ENCODE measurements at regions of chr1 and their contacts with region 1.

Region 1: GRCh38 chr1:212455803-212456528 is 23.2 kb downstream of the NENF start:
- DNase-seq: peak; percentile 91
- ATAC-seq: peak; percentile 77
- H3K4me3 Mint-ChIP-seq: no peak overlapping the region
- H3K27ac Mint-ChIP-seq: no peak overlapping the region
- H3K4me1 Mint-ChIP-seq: peaks cover 7% of the 10 kb centered on the region
- H3K27me3 Mint-ChIP-seq: no peaks in the 10 kb centered on the region

Region 2: DNA sequence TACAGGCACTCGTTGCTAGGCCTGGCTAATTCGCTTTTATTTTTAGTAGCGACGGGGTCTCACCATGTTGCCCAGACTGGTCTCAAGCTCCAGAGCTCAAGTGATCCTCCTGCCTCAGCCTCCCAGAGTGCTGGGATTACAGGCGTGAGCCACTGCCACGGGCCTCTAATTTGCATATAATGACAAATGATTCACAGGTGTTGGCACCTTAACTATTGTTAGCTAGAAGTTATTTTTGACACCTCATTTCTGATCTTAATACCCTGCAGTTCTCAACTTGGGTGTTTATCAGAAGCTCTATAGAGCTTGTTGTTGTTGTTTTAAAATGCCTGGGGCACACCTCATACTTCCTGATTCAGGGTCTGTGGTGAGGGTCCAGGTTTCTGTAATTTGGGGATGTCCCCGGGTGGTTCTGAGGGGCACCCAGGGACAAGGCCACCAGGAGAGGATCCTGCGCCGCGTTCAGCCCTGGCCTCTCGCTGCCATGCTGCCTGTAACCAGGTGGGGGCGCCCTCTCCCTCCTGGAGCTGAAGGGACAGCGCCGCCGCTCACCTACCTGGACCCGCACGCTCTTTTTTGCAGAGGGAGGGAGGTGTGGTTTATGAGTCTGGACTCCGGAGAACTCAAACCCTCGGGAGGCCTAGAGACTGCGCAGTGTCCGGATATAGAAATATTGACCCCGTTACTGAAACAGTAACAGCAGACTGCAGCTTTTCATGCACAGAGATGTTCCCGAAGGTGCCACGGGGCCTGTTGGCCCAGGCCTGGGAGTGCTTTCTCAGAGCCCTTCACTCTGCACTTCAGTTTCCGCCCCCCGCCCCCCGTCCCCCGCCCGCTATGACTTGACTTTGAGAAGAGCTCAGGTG is 757.6 kb before region 1 on chr1:
- CTCF ChIA-PET with region 1: interaction called, 35 read pairs
- POLR2A ChIA-PET with region 1: no interaction called
- intact Hi-C with region 1: loop called in 1 of 2 experiments (anchors 5 kb)
- DNase-seq: peak; percentile 92
- ATAC-seq: peak; percentile 98
- H3K4me3 Mint-ChIP-seq: no peak overlapping the region
- H3K27ac Mint-ChIP-seq: no peak overlapping the region
- H3K4me1 Mint-ChIP-seq: peaks cover 9% of the 10 kb centered on the region
- H3K27me3 Mint-ChIP-seq: no peaks in the 10 kb centered on the region

Region 3: GRCh38 chr1:211825980-211826379 is 630.0 kb before region 1 on chr1:
- CTCF ChIA-PET with region 1: no interaction called
- POLR2A ChIA-PET with region 1: no interaction called
- intact Hi-C with region 1: no loop called
- DNase-seq: no peak
- ATAC-seq: no peak
- H3K4me3 Mint-ChIP-seq: no peak overlapping the region
- H3K27ac Mint-ChIP-seq: no peak overlapping the region
- H3K4me1 Mint-ChIP-seq: peaks cover 21% of the 10 kb centered on the region
- H3K27me3 Mint-ChIP-seq: no peaks in the 10 kb centered on the region

Region 4: DNA sequence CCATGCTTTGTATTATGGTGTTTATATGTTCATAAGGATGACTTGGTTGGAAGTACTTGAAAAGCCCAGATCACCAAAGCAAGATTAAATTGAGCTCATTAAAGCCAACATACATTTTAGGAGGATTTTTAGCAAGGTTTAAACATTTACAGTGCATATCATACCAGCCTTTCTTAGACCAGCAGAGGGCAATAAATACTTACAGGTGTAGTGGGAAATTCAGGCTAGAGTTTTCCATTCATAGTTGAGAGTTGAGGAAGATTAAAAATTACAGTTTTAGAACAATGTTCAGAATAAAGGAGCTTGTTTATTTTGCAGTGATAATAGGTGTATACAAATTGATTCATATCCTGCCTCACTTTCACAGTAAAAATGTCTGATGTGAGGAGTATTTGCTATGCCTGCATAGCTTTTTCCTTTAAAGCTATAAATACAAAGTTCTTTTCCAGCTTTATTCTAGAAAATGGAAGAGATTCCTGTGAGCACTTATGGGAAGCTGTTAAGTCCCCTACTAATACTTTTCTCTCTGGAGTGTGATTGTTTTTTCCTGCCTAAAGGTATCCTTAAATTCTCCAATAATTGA is 385.2 kb before region 1 on chr1:
- CTCF ChIA-PET with region 1: interaction called, 32 read pairs
- POLR2A ChIA-PET with region 1: no interaction called
- intact Hi-C with region 1: no loop called
- DNase-seq: no peak
- ATAC-seq: no peak
- H3K4me3 Mint-ChIP-seq: no peak overlapping the region
- H3K27ac Mint-ChIP-seq: no peak overlapping the region
- H3K4me1 Mint-ChIP-seq: no peaks in the 10 kb centered on the region
- H3K27me3 Mint-ChIP-seq: no peaks in the 10 kb centered on the region

Region 5: DNA sequence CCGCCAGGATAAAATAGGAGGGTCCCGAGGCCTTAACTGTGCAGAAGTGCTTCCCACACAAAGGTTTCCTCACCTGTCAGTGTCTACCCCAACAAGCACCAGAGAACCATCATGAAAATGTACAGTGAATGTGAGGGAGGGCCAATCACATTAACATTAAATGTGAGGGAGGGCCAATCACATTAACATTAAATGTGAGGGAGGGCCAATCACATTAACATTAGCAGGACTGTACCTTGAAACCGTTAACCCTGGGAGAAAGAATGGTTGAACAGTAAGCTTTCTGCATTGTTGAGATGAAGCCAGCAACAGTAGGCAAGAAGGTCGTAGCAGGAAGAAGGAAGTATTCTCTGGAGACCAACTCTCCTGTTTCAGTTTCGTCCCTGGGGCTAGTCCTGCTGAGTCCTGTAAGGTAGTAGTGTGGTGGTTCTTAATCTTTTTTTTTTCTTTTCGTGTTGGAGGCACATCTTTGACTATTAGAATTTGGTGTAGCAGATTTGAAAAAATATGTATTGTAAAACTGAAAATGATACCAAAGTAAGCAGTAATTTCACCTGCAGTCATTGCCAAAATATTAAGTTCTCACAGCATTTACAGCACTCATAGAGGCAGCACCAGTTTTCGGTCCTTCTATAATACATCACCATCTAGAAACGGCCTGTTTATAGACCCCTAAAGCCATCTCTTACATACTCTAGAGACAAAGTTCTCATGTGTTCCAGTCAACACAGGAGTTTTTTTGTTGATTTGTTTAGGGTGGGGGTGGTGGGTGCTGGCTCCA is 269.3 kb before region 1 on chr1:
- CTCF ChIA-PET with region 1: no interaction called
- POLR2A ChIA-PET with region 1: no interaction called
- intact Hi-C with region 1: no loop called
- DNase-seq: no peak
- ATAC-seq: peak; percentile 59
- H3K4me3 Mint-ChIP-seq: no peak overlapping the region
- H3K27ac Mint-ChIP-seq: peak overlapping the region; percentile 8
- H3K4me1 Mint-ChIP-seq: peaks cover 19% of the 10 kb centered on the region
- H3K27me3 Mint-ChIP-seq: no peaks in the 10 kb centered on the region

Region 6: GRCh38 chr1:212375986-212376385 is 80.0 kb before region 1 on chr1:
- CTCF ChIA-PET with region 1: interaction called, 21 read pairs
- POLR2A ChIA-PET with region 1: no interaction called
- intact Hi-C with region 1: no loop called
- DNase-seq: no peak
- ATAC-seq: no peak
- H3K4me3 Mint-ChIP-seq: no peak overlapping the region
- H3K27ac Mint-ChIP-seq: no peak overlapping the region
- H3K4me1 Mint-ChIP-seq: no peaks in the 10 kb centered on the region
- H3K27me3 Mint-ChIP-seq: no peaks in the 10 kb centered on the region

Region 7: DNA sequence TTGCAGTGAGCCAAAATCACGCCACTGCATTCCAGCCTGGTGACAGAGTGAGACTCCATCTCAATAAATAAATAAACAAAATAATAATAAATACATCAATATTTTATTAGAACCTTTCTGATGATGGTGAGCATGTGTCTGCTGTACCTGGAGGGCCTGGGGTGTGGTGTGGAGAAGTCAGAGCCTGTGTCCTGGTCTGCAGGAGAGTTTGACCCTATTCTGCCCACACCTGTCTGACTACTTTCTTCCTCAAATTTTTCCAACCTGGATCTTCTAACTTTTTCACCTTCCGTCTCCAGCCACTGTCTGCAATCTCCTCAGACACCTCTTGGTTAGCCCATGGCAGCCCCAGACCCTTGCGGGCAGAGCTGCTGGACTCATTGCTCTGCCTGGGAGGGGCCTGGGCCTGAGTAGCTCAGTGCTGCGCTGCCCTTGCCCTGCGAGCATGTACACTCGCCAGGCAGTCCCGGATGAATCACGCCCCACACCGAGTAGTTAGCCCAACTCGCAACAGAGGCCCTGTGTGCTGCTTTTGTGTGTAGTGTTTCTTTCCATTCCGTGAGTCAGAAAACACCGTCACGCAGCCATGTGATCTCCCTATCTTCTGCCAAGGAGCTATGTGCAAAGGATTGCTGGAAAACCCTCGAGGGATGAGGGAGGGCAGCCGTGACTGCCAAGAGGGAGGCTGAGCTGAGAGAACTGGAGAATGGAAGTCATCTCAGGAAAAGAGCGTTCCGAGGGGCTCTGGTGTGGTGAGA is 13.9 kb after region 1 on chr1:
- CTCF ChIA-PET with region 1: interaction called, 74 read pairs
- POLR2A ChIA-PET with region 1: no interaction called
- intact Hi-C with region 1: no loop called
- DNase-seq: no peak
- ATAC-seq: no peak
- H3K4me3 Mint-ChIP-seq: no peak overlapping the region
- H3K27ac Mint-ChIP-seq: no peak overlapping the region
- H3K4me1 Mint-ChIP-seq: no peaks in the 10 kb centered on the region
- H3K27me3 Mint-ChIP-seq: no peaks in the 10 kb centered on the region

Region 8: DNA sequence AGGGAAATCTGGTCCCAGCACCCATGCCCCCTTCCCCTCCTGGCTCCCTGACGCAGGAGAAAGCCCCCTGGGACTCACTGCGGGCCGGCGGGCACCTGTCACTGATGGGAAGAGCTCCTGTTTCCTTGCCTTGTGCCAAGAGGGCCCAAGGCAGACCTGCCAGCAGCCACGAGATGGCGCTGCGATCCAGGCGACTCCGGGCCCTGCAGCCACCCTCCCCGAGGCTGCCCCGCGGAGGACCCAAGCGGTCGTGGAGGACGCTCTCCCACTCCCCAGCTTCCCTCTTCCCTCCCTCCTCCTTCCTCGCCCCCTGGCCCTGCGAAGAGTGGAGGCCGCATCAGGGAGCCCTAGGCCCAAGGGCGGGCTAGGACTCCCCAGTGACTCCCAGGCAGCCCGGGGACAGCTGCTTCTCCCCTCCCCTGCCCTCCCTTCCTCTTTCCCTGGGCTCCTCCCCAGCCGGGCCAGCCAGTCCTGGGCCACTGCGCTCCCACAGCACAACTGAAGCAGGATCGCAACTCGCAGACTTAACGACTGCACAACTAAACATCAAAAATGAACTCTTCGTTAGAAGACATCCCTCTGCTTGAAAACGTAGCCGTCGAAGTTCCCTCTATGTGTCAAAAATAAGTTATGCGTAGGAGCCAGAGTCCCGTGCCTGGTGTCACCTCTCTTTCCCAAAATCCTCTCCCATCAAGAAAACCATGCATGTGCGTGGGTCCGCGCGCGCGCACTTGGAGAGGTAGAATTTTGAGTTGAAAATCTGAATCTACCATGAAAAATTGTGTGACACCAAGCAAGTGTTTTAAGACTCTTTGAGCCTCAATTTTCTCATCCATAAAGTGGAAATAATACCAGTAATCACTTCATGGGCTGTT is 209.5 kb after region 1 on chr1:
- CTCF ChIA-PET with region 1: interaction called, 19 read pairs
- POLR2A ChIA-PET with region 1: no interaction called
- intact Hi-C with region 1: no loop called
- DNase-seq: peak; percentile 91
- ATAC-seq: peak; percentile 98
- H3K4me3 Mint-ChIP-seq: peak overlapping the region; percentile 57
- H3K27ac Mint-ChIP-seq: peak overlapping the region; percentile 77
- H3K4me1 Mint-ChIP-seq: peaks cover 15% of the 10 kb centered on the region
- H3K27me3 Mint-ChIP-seq: peaks cover 3% of the 10 kb centered on the region

Region 9: GRCh38 chr1:212990276-212990675 is 534.3 kb after region 1 on chr1:
- CTCF ChIA-PET with region 1: interaction called, 21 read pairs
- POLR2A ChIA-PET with region 1: no interaction called
- intact Hi-C with region 1: loop called (anchors 5 to 10 kb)
- DNase-seq: no peak
- ATAC-seq: no peak
- H3K4me3 Mint-ChIP-seq: no peak overlapping the region
- H3K27ac Mint-ChIP-seq: no peak overlapping the region
- H3K4me1 Mint-ChIP-seq: peaks cover 8% of the 10 kb centered on the region
- H3K27me3 Mint-ChIP-seq: no peaks in the 10 kb centered on the region

Measured in activated CD4-positive, alpha-beta T cell treated with anti-CD3 and anti-CD28 coated beads for 36 hours (primary cell).